ENCODE measurements at regions of chr16 and their contacts with region 1.

Region 1: GRCh38 chr16:19844945-19845641 is 39.6 kb downstream of the GPRC5B start:
- DNase-seq: no peak
- ATAC-seq: no peak

Region 2: GRCh38 chr16:19753815-19754643 is 91.1 kb before region 1 on chr16:
- intact Hi-C with region 1: no loop called
- DNase-seq: no peak
- ATAC-seq: peak; percentile 10

Region 3: GRCh38 chr16:19860166-19861041 is 15.3 kb after region 1 on chr16:
- intact Hi-C with region 1: loop called (anchors 2 kb)
- DNase-seq: no peak
- ATAC-seq: no peak

Region 4: DNA sequence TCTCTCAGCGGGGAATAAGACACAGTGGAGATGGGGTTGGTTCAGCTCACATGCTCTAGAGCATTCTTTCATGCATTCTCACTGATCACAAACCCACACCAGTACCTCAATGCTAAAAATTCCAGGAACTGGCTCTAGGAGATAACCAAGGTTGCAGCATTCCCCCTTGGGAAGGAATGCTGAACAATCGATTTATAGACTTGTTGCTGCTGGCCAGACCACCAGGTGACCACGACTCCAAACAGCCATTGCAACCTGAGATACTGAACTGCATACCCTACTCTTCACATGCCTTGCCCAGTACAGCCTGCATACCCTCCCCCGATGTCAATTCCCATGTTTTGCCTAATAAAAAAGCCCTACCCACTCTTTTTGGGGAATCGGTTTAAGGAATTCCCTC is 114.6 kb after region 1 on chr16:
- intact Hi-C with region 1: no loop called
- DNase-seq: no peak
- ATAC-seq: no peak